HepG2 (cell line): ENCODE measurements at regions of chr1 and their contacts with region 1.

Region 1: DNA sequence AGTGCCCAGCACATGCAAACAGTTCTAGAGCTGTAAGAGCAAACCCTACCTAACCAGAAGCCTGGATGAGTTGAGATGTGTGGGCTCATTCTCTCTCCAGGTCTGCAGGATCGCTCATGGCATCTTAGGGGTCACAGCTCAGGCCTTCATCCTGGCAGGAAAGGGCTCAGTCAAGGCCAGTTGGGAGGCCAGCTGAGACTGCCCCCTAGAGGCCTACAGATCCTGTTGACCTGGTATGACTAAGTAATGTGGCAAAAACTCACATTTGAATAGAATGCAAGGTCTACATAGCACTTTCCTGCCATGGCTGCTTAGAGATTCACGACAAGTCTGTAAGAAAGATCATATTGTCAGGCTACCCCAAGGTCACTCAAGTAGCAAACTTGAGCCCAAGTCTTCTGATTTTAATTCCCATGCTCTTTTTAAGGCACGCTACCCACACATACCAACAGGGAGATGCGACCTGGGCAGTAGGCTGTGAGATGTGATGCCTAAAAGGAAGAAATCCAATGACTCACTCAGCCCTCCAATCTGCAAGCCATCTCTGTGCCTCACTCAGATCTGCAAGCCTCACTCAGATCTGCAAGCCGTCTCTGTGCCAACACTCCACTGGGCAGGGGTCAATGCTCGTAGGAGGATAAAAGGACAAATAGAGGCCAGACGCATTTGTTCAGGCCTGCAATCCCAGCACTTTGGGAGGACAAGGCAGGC is 5.1 kb upstream of the CAPN8 start:
- DNase-seq: peak; percentile 31
- ATAC-seq: peak; percentile 94
- H3K4me3 ChIP-seq: no peak overlapping the region
- H3K27ac ChIP-seq: no peak overlapping the region
- H3K4me1 ChIP-seq: peaks cover 5% of the 10 kb centered on the region
- H3K27me3 ChIP-seq: peaks cover 0 to 2% of the 10 kb centered on the region in 2 experiments; a peak in 1 of 5 replicates
- CTCF ChIP-seq: peak; percentile 72
- EP300 ChIP-seq: no peak
- POLR2A ChIP-seq: no peak
- RAD21 ChIP-seq: peak; percentile 59; the same call in 1 of the 2 replicates

Region 2: GRCh38 chr1:223556414-223557129 is 114.0 kb before region 1 on chr1:
- CTCF ChIA-PET with region 1: interaction called, 20 read pairs
- POLR2A ChIA-PET with region 1: no interaction called
- in situ Hi-C with region 1: no loop called
- intact Hi-C with region 1: no loop called
- DNase-seq: peak; percentile 25
- ATAC-seq: peak; percentile 98
- H3K4me3 ChIP-seq: no peak overlapping the region
- H3K27ac ChIP-seq: no peak overlapping the region
- H3K4me1 ChIP-seq: no peaks in the 10 kb centered on the region
- H3K27me3 ChIP-seq: no peaks in the 10 kb centered on the region
- CTCF ChIP-seq: peak; percentile 91
- EP300 ChIP-seq: no peak
- POLR2A ChIP-seq: no peak
- RAD21 ChIP-seq: peak; percentile 88

Region 3: GRCh38 chr1:223628233-223629125 is 42.1 kb before region 1 on chr1:
- CTCF ChIA-PET with region 1: no interaction called
- POLR2A ChIA-PET with region 1: no interaction called
- in situ Hi-C with region 1: no loop called
- intact Hi-C with region 1: loop called (anchors 2 kb)
- DNase-seq: peak; percentile 50
- ATAC-seq: peak; percentile 93
- H3K4me3 ChIP-seq: no peak overlapping the region
- H3K27ac ChIP-seq: no peak overlapping the region
- H3K4me1 ChIP-seq: peaks cover 14% of the 10 kb centered on the region
- H3K27me3 ChIP-seq: no peaks in the 10 kb centered on the region; a peak in 1 of 5 replicates
- CTCF ChIP-seq: peak; percentile 89
- EP300 ChIP-seq: no peak
- POLR2A ChIP-seq: no peak
- RAD21 ChIP-seq: peak; percentile 56; the same call in 1 of the 2 replicates